Dendritic cell treated with granulocyte-macrophage colony-stimulating factor and Interleukin-4, amounts not matched to agents 40 ng/mL and 50 ng/mL, for 4 days (primary cell): ENCODE measurements at regions of chr21 and their contacts with region 1.

Region 1: GRCh38 chr21:39079617-39080016 is 103.6 kb downstream of the PSMG1 start:
- H3K4me3 Mint-ChIP-seq: peak overlapping the region; percentile 24
- H3K27ac Mint-ChIP-seq: peak overlapping the region; percentile 81
- H3K4me1 Mint-ChIP-seq: peaks cover 61% of the 10 kb centered on the region
- H3K27me3 Mint-ChIP-seq: peaks cover 7% of the 10 kb centered on the region

Region 2: GRCh38 chr21:38831526-38832467 is 247.8 kb before region 1 on chr21:
- intact Hi-C with region 1: loop called (anchors 1 kb)
- H3K4me3 Mint-ChIP-seq: no peak overlapping the region
- H3K27ac Mint-ChIP-seq: peak overlapping the region; percentile 75
- H3K4me1 Mint-ChIP-seq: peaks cover 31% of the 10 kb centered on the region
- H3K27me3 Mint-ChIP-seq: peaks cover 13% of the 10 kb centered on the region

Region 3: GRCh38 chr21:39004634-39005501 is 74.7 kb before region 1 on chr21:
- intact Hi-C with region 1: loop called (anchors 5 kb)
- H3K4me3 Mint-ChIP-seq: peak overlapping the region; percentile 42
- H3K27ac Mint-ChIP-seq: peak overlapping the region; percentile 86
- H3K4me1 Mint-ChIP-seq: peaks cover 88% of the 10 kb centered on the region
- H3K27me3 Mint-ChIP-seq: peaks cover 18% of the 10 kb centered on the region

Region 4: DNA sequence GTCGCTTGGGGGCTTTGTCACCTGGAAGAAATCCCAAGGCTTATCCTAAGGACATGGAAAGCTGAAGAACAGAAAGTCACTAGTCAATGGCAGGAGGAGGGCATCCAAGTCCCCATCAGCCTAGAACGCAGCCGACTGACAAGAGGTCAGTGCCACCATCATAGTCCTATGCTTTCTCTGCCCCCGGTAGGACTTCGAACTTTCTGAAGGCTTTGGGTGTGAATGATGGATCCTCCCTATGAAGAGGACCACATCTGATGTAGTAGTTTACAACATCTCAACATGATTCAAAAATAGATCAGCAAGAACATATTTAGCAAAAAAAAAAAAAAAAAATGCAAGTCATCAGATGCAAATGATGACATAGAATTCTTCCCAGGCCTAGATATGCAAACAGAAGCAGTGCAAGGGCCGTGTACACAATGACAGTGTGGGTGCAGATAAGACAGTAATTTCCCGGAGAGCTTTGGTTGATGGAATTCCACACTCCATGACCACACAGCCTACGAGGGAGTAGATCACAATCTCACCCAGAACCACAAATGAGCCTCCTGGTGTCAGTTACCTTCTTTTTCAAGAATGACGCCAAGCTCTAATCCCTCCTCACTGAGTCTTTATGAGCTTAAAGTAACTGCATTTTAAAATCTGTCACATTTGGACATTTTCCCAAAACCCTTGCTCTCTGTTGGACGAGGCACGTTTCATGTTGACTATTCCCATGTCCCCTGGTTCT is 15.4 kb after region 1 on chr21:
- intact Hi-C with region 1: loop called (anchors 2 kb)
- H3K4me3 Mint-ChIP-seq: peak overlapping the region; percentile 39
- H3K27ac Mint-ChIP-seq: peak overlapping the region; percentile 94
- H3K4me1 Mint-ChIP-seq: peaks cover 89% of the 10 kb centered on the region
- H3K27me3 Mint-ChIP-seq: peaks cover 5% of the 10 kb centered on the region